CD8-positive, alpha-beta T cell (primary cell): ENCODE measurements at regions of chr9 and their contacts with region 1.

Region 1: GRCh38 chr9:77433675-77434445 is 214.3 kb downstream of the GNA14 start:
- DNase-seq: peak in 7 of 9 experiments; percentile 9 to 59 (median 46)
- ATAC-seq: peak; percentile 70
- H3K4me3 ChIP-seq: no peak overlapping the region
- H3K4me3 Mint-ChIP-seq: no peak overlapping the region
- H3K27ac ChIP-seq: no peak overlapping the region
- H3K27ac Mint-ChIP-seq: no peak overlapping the region
- H3K4me1 ChIP-seq: no peaks in the 10 kb centered on the region
- H3K4me1 Mint-ChIP-seq: peaks cover 2% of the 10 kb centered on the region
- H3K27me3 ChIP-seq: no peaks in the 10 kb centered on the region
- H3K27me3 Mint-ChIP-seq: peaks cover 8% of the 10 kb centered on the region
- CTCF ChIP-seq: peak; percentile 88

Region 2: DNA sequence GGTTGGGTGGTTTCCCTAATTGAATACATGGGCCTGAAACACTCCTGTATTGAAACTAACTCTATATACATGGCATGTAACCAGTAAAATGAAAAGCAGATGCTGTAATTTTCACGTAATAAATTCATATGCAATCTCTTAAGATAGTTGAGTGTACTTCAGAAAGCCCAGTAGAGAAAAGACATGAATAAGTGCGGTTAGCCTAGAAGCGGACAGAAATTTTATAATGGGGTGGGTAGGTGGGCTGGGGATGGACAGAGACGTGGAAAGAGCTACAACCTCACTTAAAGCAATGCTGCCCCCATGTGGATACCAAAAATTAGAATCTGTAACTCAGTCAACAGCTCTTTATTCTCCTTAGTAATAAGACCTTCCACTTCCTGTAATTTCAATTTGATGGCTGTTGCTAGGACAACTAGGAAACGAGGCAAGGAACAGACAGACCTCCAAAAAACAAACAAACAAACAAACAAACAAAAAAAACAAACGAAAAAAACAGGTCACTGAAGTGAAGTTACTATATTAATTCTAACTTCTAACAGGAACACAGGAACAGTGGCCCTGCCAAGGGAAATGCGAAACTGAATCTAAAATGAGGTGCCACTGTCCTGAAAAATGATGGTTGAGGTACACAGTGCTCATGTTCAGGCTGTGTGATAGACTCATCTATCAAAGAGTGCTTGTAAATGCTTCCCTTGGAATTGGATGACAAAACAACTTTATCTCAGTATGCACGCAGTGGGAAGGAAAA is 317.7 kb after region 1 on chr9:
- CTCF ChIA-PET with region 1: no interaction called
- POLR2A ChIA-PET with region 1: no interaction called
- intact Hi-C with region 1: loop called in 1 of 2 experiments (anchors 5 kb)
- DNase-seq: peak in 2 of 9 experiments; percentile 17 to 33
- ATAC-seq: no peak
- H3K4me3 ChIP-seq: no peak overlapping the region
- H3K4me3 Mint-ChIP-seq: no peak overlapping the region
- H3K27ac ChIP-seq: no peak overlapping the region
- H3K27ac Mint-ChIP-seq: no peak overlapping the region
- H3K4me1 ChIP-seq: no peaks in the 10 kb centered on the region
- H3K4me1 Mint-ChIP-seq: peaks cover 20% of the 10 kb centered on the region
- H3K27me3 ChIP-seq: no peaks in the 10 kb centered on the region
- H3K27me3 Mint-ChIP-seq: no peaks in the 10 kb centered on the region
- CTCF ChIP-seq: no peak